IMR-90 (cell line): ENCODE measurements at regions of chr15 and their contacts with region 1.

Region 1: GRCh38 chr15:55917881-55918296 is 75.5 kb downstream of the NEDD4 start:
- DNase-seq: peak; percentile 96
- ATAC-seq: peak; percentile 89
- H3K4me3 ChIP-seq: no peak overlapping the region
- H3K27ac ChIP-seq: no peak overlapping the region
- H3K4me1 ChIP-seq: no peaks in the 10 kb centered on the region
- H3K27me3 ChIP-seq: no peaks in the 10 kb centered on the region
- CTCF ChIP-seq: peak; percentile 86
- POLR2A ChIP-seq: no peak
- RAD21 ChIP-seq: peak; percentile 71

Region 2: DNA sequence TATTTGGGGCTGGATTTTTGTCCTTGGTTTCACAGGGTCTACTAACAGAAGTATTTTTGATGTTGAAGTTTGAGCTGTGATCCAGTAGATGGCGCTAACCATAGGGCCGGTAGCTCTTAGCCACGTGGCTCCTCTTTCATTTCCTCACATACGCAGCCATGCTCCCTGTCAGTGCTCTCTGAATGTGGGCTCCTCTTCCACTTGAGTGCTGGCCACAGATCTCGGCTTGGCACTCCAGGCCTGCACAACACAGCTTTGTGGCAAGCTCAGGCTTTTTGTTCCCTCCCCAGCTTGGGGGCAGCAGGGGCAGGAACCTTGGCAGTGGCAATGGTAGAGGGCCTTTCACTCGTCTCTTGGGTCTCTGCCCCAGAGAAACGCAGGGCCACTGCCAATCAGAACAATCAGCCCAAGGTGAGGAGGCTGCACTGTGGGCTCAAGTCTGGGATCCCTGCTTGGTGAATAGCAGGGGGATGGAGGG is 391.3 kb before region 1 on chr15:
- CTCF ChIA-PET with region 1: no interaction called
- POLR2A ChIA-PET with region 1: no interaction called
- dilution Hi-C with region 1: no loop called
- in situ Hi-C with region 1: no loop called
- intact Hi-C with region 1: loop called (anchors 5 kb)
- DNase-seq: peak; percentile 71
- ATAC-seq: peak; percentile 89
- H3K4me3 ChIP-seq: no peak overlapping the region
- H3K27ac ChIP-seq: no peak overlapping the region
- H3K4me1 ChIP-seq: peaks cover 2% of the 10 kb centered on the region
- H3K27me3 ChIP-seq: peaks cover 6% of the 10 kb centered on the region; the same call in 1 of the 2 replicates
- CTCF ChIP-seq: peak; percentile 70
- POLR2A ChIP-seq: no peak
- RAD21 ChIP-seq: peak; percentile 69

Region 3: GRCh38 chr15:55742927-55743728 is 174.8 kb before region 1 on chr15 and contains the start of gene PRTG:
- CTCF ChIA-PET with region 1: no interaction called
- POLR2A ChIA-PET with region 1: no interaction called
- dilution Hi-C with region 1: no loop called
- in situ Hi-C with region 1: no loop called
- intact Hi-C with region 1: loop called (anchors 5 kb)
- DNase-seq: peak; percentile 69
- ATAC-seq: peak; percentile 97
- H3K4me3 ChIP-seq: peak within 1 kb of the TSS; percentile 71
- H3K27ac ChIP-seq: no peak within 1 kb of the TSS; the same call in 1 of the 2 replicates
- H3K4me1 ChIP-seq: peaks cover 3% of the 10 kb centered on the region; the same call in 1 of the 2 replicates
- H3K27me3 ChIP-seq: peaks cover 10% of the 10 kb centered on the region
- CTCF ChIP-seq: no peak
- POLR2A ChIP-seq: no peak
- RAD21 ChIP-seq: no peak
- total RNA-seq, gene PRTG: 1.4 and 1.7 TPM in 2 replicates

Region 4: GRCh38 chr15:55858661-55859060 is 59.2 kb before region 1 on chr15:
- CTCF ChIA-PET with region 1: no interaction called
- POLR2A ChIA-PET with region 1: no interaction called
- dilution Hi-C with region 1: no loop called
- in situ Hi-C with region 1: no loop called
- intact Hi-C with region 1: loop called (anchors 5 kb)
- DNase-seq: peak; percentile 52
- ATAC-seq: no peak
- H3K4me3 ChIP-seq: no peak overlapping the region
- H3K27ac ChIP-seq: no peak overlapping the region
- H3K4me1 ChIP-seq: peaks cover 8% of the 10 kb centered on the region
- H3K27me3 ChIP-seq: no peaks in the 10 kb centered on the region
- CTCF ChIP-seq: no peak
- POLR2A ChIP-seq: no peak
- RAD21 ChIP-seq: no peak

Region 5: GRCh38 chr15:55993111-55993803 is 75.4 kb after region 1 on chr15 and contains the start of gene NEDD4:
- CTCF ChIA-PET with region 1: interaction called, 9 read pairs
- POLR2A ChIA-PET with region 1: no interaction called
- dilution Hi-C with region 1: no loop called
- in situ Hi-C with region 1: no loop called
- intact Hi-C with region 1: loop called (anchors 2 kb)
- DNase-seq: peak; percentile 86
- ATAC-seq: peak; percentile 96
- H3K4me3 ChIP-seq: peak within 1 kb of the TSS; percentile 86
- H3K27ac ChIP-seq: peak within 1 kb of the TSS; percentile 96
- H3K4me1 ChIP-seq: peaks cover 4% of the 10 kb centered on the region
- H3K27me3 ChIP-seq: no peaks in the 10 kb centered on the region
- CTCF ChIP-seq: peak; percentile 61
- POLR2A ChIP-seq: no peak
- RAD21 ChIP-seq: no peak; the same call in 1 of the 2 replicates
- total RNA-seq, gene NEDD4: 80.7 and 106 TPM in 2 replicates

Region 6: GRCh38 chr15:56052395-56053045 is 134.6 kb after region 1 on chr15:
- CTCF ChIA-PET with region 1: no interaction called
- POLR2A ChIA-PET with region 1: no interaction called
- dilution Hi-C with region 1: no loop called
- in situ Hi-C with region 1: no loop called
- intact Hi-C with region 1: loop called (anchors 2 kb)
- DNase-seq: peak; percentile 68
- ATAC-seq: peak; percentile 90
- H3K4me3 ChIP-seq: no peak overlapping the region
- H3K27ac ChIP-seq: no peak overlapping the region
- H3K4me1 ChIP-seq: peaks cover 7% of the 10 kb centered on the region
- H3K27me3 ChIP-seq: no peaks in the 10 kb centered on the region
- CTCF ChIP-seq: peak; percentile 74
- POLR2A ChIP-seq: no peak
- RAD21 ChIP-seq: peak; percentile 71